ENCODE measurements at regions of chr3 and their contacts with region 1.

Region 1: GRCh38 chr3:105686278-105686897 is 182.4 kb downstream of the CBLB start:
- DNase-seq: peak; percentile 24
- H3K4me3 ChIP-seq: no peak overlapping the region
- H3K27ac ChIP-seq: no peak overlapping the region
- H3K4me1 ChIP-seq: no peaks in the 10 kb centered on the region
- H3K27me3 ChIP-seq: no peaks in the 10 kb centered on the region
- CTCF ChIP-seq: peak; percentile 58
- POLR2A ChIP-seq: no peak

Region 2: GRCh38 chr3:106206146-106206545 is 519.8 kb after region 1 on chr3:
- CTCF ChIA-PET with region 1: interaction called, 4 read pairs
- POLR2A ChIA-PET with region 1: no interaction called
- dilution Hi-C with region 1: no loop called
- intact Hi-C with region 1: loop called (anchors 5 kb)
- DNase-seq: peak; percentile 83
- H3K4me3 ChIP-seq: peak overlapping the region in 1 of 3 experiments; percentile 35
- H3K27ac ChIP-seq: peak overlapping the region; percentile 32
- H3K4me1 ChIP-seq: peaks cover 16% of the 10 kb centered on the region
- H3K27me3 ChIP-seq: no peaks in the 10 kb centered on the region
- CTCF ChIP-seq: no peak
- POLR2A ChIP-seq: no peak

Region 3: GRCh38 chr3:106392915-106393314 is 706.5 kb after region 1 on chr3:
- CTCF ChIA-PET with region 1: no interaction called
- POLR2A ChIA-PET with region 1: no interaction called
- dilution Hi-C with region 1: no loop called
- intact Hi-C with region 1: no loop called
- DNase-seq: no peak
- H3K4me3 ChIP-seq: no peak overlapping the region
- H3K27ac ChIP-seq: no peak overlapping the region
- H3K4me1 ChIP-seq: no peaks in the 10 kb centered on the region
- H3K27me3 ChIP-seq: no peaks in the 10 kb centered on the region
- CTCF ChIP-seq: no peak
- POLR2A ChIP-seq: no peak

Region 4: GRCh38 chr3:107117922-107118536 is 1431.6 kb after region 1 on chr3:
- CTCF ChIA-PET with region 1: interaction called, 6 read pairs
- POLR2A ChIA-PET with region 1: no interaction called
- dilution Hi-C with region 1: no loop called
- intact Hi-C with region 1: loop called (anchors 2 kb)
- DNase-seq: peak; percentile 60
- H3K4me3 ChIP-seq: no peak overlapping the region
- H3K27ac ChIP-seq: no peak overlapping the region
- H3K4me1 ChIP-seq: no peaks in the 10 kb centered on the region
- H3K27me3 ChIP-seq: peaks cover 0 to 8% of the 10 kb centered on the region in 2 experiments
- CTCF ChIP-seq: peak; percentile 43 to 52
- POLR2A ChIP-seq: no peak

Measured in endothelial cell of umbilical vein (primary cell).